B cell (primary cell): ENCODE measurements at regions of chr14 and their contacts with region 1.

Region 1: GRCh38 chr14:70809543-70810244 is 381 bp upstream of the MAP3K9 start:
- DNase-seq: peak; percentile 93
- ATAC-seq: peak; percentile 86
- H3K4me3 ChIP-seq: peak overlapping the region; percentile 48 to 85 (median 74)
- H3K4me3 Mint-ChIP-seq: no peak overlapping the region
- H3K27ac ChIP-seq: peak overlapping the region; percentile 22 to 65
- H3K27ac Mint-ChIP-seq: peak overlapping the region; percentile 87
- H3K4me1 ChIP-seq: peaks cover 16 to 24% of the 10 kb centered on the region in 2 donors
- H3K4me1 Mint-ChIP-seq: peaks cover 14% of the 10 kb centered on the region
- H3K27me3 ChIP-seq: no peaks in the 10 kb centered on the region
- H3K27me3 Mint-ChIP-seq: no peaks in the 10 kb centered on the region
- CTCF ChIP-seq: no peak

Region 2: DNA sequence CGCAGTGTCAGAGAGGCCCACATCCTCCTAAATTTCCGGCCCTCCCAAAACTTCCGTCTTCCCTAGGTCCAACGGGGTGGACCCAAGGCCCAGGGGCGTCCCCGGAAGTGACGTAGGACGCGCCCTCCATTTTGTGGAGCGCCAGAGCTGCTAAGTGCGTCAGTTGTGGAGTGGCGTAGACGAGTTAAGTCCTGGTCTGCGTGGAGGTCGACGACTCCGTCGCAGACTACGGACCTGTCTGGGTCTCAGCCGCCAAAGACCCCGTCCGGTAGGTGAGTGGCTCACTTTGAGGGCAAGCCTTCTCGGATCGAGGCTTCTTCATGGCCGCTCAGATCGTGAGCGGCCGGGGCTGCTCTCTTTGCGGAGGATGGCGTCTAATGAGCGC is 1042.7 kb before region 1 on chr14 and contains the start of gene SRSF5:
- CTCF ChIA-PET with region 1: no interaction called
- POLR2A ChIA-PET with region 1: no interaction called
- intact Hi-C with region 1: loop called (anchors 10 kb)
- DNase-seq: peak; percentile 98
- ATAC-seq: peak; percentile 80
- H3K4me3 ChIP-seq: peak within 1 kb of the TSS; percentile 97 to 100 (median 99)
- H3K4me3 Mint-ChIP-seq: peak within 1 kb of the TSS; percentile 98
- H3K27ac ChIP-seq: peak within 1 kb of the TSS; percentile 99 to 100
- H3K27ac Mint-ChIP-seq: peak within 1 kb of the TSS; percentile 100
- H3K4me1 ChIP-seq: peaks cover 26 to 27% of the 10 kb centered on the region in 2 donors
- H3K4me1 Mint-ChIP-seq: peaks cover 43% of the 10 kb centered on the region
- H3K27me3 ChIP-seq: no peaks in the 10 kb centered on the region
- H3K27me3 Mint-ChIP-seq: no peaks in the 10 kb centered on the region
- CTCF ChIP-seq: no peak
- total RNA-seq, gene SRSF5: 708 and 768 TPM in 2 replicates

Region 3: GRCh38 chr14:70655110-70655826 is 154.4 kb before region 1 on chr14:
- CTCF ChIA-PET with region 1: no interaction called
- POLR2A ChIA-PET with region 1: no interaction called
- intact Hi-C with region 1: loop called (anchors 5 kb)
- DNase-seq: peak; percentile 88
- ATAC-seq: peak; percentile 83
- H3K4me3 ChIP-seq: peak overlapping the region; percentile 6 to 53 (median 21)
- H3K4me3 Mint-ChIP-seq: peak overlapping the region; percentile 91
- H3K27ac ChIP-seq: peak overlapping the region; percentile 91 to 93
- H3K27ac Mint-ChIP-seq: peak overlapping the region; percentile 98
- H3K4me1 ChIP-seq: peaks cover 82 to 85% of the 10 kb centered on the region in 2 donors
- H3K4me1 Mint-ChIP-seq: peaks cover 83% of the 10 kb centered on the region
- H3K27me3 ChIP-seq: no peaks in the 10 kb centered on the region
- H3K27me3 Mint-ChIP-seq: no peaks in the 10 kb centered on the region
- CTCF ChIP-seq: no peak

Region 4: DNA sequence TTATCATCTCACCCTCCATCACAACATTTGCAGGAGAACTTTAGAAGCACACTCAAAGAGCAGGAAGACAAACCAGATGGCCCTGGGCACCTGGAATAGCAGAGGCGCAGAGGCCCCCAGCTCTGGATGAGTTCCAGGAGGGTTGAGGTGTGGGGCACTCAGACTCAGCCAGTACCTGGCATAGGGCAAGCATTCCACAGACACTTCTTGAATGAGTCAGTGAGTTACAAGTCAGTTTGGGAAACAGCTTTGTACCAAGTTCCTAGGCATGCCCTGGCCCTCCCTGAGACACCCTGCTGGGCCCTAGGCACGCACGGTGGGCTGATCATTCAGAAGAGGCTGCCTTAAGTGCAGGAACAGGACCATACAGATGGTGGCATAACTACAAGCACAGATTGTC is 54.7 kb before region 1 on chr14:
- CTCF ChIA-PET with region 1: no interaction called
- POLR2A ChIA-PET with region 1: no interaction called
- intact Hi-C with region 1: no loop called
- DNase-seq: no peak
- ATAC-seq: no peak
- H3K4me3 ChIP-seq: no peak overlapping the region
- H3K4me3 Mint-ChIP-seq: no peak overlapping the region
- H3K27ac ChIP-seq: no peak overlapping the region
- H3K27ac Mint-ChIP-seq: no peak overlapping the region
- H3K4me1 ChIP-seq: no peaks in the 10 kb centered on the region
- H3K4me1 Mint-ChIP-seq: no peaks in the 10 kb centered on the region
- H3K27me3 ChIP-seq: no peaks in the 10 kb centered on the region
- H3K27me3 Mint-ChIP-seq: no peaks in the 10 kb centered on the region
- CTCF ChIP-seq: no peak

Region 5: DNA sequence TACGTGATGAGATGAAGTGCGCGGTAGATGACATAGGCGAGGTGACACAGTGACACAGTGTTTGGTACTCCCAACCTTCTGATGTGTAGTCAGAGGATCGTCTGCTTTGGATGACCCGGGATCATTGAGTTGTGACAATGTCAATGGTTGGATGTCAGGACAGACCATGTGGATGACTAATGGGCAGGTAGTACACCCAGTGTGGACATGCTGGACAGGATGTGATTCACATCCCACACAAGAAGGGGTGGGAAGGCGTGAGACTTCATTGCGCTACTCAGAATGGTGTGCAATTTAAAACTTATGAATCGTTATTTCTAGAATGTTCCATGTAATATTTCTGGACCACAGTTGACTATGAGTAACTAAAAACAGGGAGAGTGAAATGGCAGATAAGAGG is 24.1 kb before region 1 on chr14:
- CTCF ChIA-PET with region 1: interaction called, 22 read pairs
- POLR2A ChIA-PET with region 1: interaction called, 17 read pairs
- intact Hi-C with region 1: no loop called
- DNase-seq: no peak
- ATAC-seq: no peak
- H3K4me3 ChIP-seq: no peak overlapping the region
- H3K4me3 Mint-ChIP-seq: no peak overlapping the region
- H3K27ac ChIP-seq: no peak overlapping the region
- H3K27ac Mint-ChIP-seq: no peak overlapping the region
- H3K4me1 ChIP-seq: peaks cover 21 to 24% of the 10 kb centered on the region in 2 donors
- H3K4me1 Mint-ChIP-seq: peaks cover 25% of the 10 kb centered on the region
- H3K27me3 ChIP-seq: no peaks in the 10 kb centered on the region
- H3K27me3 Mint-ChIP-seq: no peaks in the 10 kb centered on the region
- CTCF ChIP-seq: no peak

Region 6: DNA sequence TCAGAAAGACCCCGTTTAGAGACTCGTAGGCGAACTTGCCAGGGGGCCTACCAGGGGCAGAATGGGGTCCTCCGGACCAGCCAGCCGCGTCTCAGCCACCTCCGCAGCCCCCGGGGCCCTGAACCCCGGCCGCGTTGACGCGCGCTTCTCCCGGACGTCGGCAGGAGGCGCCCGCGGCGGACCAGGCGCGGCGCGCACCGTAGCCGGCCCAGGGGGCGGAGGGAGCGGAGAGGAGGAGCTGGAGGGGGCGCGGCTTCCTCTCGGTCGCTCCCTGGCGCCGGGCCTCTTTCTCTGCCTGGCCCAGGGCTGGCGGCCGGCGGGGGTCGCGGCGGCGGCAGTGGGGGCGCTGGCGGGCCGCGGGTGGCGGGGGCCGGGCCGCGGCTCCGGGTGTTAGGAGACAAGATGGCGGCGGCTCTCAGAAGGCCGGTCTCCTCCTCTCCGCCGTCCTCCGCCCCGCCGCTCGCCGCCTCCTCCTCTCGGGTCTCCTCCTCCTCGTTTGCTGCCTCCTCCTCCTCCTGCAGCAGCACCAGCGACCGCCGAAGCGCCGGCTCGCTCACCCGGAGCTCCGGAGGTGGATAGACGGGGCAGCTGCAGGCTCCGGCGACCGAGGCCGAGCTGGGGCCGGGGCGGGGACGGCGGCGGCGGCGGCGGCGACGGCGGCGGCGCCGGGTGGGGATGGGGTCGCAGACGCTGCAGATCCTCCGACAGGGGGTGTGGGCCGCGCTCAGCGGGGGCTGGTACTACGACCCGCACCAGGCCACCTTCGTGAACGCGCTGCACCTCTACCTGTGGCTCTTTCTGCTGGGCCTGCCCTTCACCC is 97.7 kb after region 1 on chr14 and contains the start of gene PCNX1:
- CTCF ChIA-PET with region 1: interaction called, 8 read pairs
- POLR2A ChIA-PET with region 1: interaction called, 3 read pairs
- intact Hi-C with region 1: loop called (anchors 1 kb)
- DNase-seq: peak; percentile 95
- ATAC-seq: peak; percentile 82
- H3K4me3 ChIP-seq: peak within 1 kb of the TSS; percentile 76 to 92 (median 84)
- H3K4me3 Mint-ChIP-seq: peak within 1 kb of the TSS; percentile 82
- H3K27ac ChIP-seq: peak within 1 kb of the TSS; percentile 87 to 95
- H3K27ac Mint-ChIP-seq: peak within 1 kb of the TSS; percentile 87
- H3K4me1 ChIP-seq: peaks cover 22 to 25% of the 10 kb centered on the region in 2 donors
- H3K4me1 Mint-ChIP-seq: peaks cover 33% of the 10 kb centered on the region
- H3K27me3 ChIP-seq: no peaks in the 10 kb centered on the region
- H3K27me3 Mint-ChIP-seq: no peaks in the 10 kb centered on the region
- CTCF ChIP-seq: peak; percentile 86
- total RNA-seq, gene PCNX1: 81.1 and 84.5 TPM in 2 replicates